A549 (cell line): ENCODE measurements at regions of chr2 and their contacts with region 1.

Region 1: DNA sequence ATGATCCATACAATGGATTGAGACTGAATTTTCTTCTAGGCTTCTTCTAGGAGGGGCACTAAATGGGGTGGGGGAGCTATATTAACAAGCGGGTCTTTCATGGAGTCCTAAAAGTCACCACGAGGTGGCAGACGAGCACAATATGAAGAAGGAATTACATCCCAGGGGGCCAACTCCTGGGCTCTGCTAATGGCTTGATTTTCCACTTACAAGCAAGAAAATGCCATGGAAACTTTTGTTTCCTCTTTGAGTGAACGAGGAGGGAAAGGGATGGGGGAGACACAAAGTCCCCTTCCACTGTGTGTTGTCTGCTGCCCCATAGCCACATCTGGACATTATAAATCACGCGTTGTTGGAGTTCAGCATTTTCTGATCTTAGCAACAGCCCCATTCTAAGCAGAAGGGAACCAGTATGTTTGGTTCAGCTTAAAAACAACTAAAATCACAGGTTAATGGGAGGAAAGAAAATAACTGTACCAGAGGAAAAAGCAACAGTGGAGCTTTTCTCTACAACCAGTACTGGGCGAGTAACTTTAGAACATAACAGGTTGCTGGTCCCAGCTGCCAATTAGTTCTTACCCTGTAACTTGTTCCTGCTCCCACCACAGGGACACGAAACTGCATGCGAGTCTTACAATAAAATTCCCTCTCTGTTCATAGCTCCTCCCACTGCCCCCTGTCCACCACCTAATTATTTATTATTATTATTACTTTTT is 285.0 kb upstream of the PARD3B start:
- DNase-seq: peak; percentile 63 to 70
- ATAC-seq: peak; percentile 77 to 97; a peak in 4 of 6 replicates
- H3K4me3 ChIP-seq: no peak overlapping the region
- H3K27ac ChIP-seq: no peak overlapping the region
- H3K4me1 ChIP-seq: no peaks in the 10 kb centered on the region
- CTCF ChIP-seq: peak; percentile 89
- EP300 ChIP-seq: no peak
- POLR2A ChIP-seq: no peak
- RAD21 ChIP-seq: peak; percentile 79 to 84

Region 2: GRCh38 chr2:204272089-204272488 is 11.8 kb after region 1 on chr2:
- CTCF ChIA-PET with region 1: interaction called, 13 read pairs
- POLR2A ChIA-PET with region 1: no interaction called
- DNase-seq: no peak
- ATAC-seq: no peak
- H3K4me3 ChIP-seq: no peak overlapping the region
- H3K27ac ChIP-seq: no peak overlapping the region
- H3K4me1 ChIP-seq: no peaks in the 10 kb centered on the region
- CTCF ChIP-seq: no peak
- EP300 ChIP-seq: no peak
- POLR2A ChIP-seq: no peak
- RAD21 ChIP-seq: no peak

Region 3: DNA sequence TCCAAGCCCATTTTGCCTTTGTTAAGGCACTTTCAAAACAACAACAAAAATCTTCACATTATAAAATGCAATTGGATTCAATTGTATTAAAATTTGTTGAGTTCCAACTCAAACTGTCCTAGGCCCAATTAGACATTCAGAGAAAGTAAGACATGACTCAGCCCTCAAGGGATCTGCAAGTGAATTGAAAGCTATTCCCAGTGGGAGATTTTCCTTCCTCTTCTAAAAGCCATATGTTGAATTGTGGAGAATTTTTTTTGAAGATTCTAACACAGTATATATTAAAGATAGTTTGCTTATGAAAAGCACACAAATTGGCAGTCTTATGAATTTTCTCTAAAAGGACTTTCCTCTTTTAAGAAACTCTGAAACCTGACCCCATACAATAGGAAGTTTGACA is 16.9 kb after region 1 on chr2:
- CTCF ChIA-PET with region 1: interaction called, 13 read pairs
- POLR2A ChIA-PET with region 1: no interaction called
- DNase-seq: no peak
- ATAC-seq: no peak
- H3K4me3 ChIP-seq: no peak overlapping the region
- H3K27ac ChIP-seq: no peak overlapping the region
- H3K4me1 ChIP-seq: no peaks in the 10 kb centered on the region
- CTCF ChIP-seq: no peak
- EP300 ChIP-seq: no peak
- POLR2A ChIP-seq: no peak
- RAD21 ChIP-seq: no peak

Region 4: GRCh38 chr2:204578938-204579598 is 318.7 kb after region 1 on chr2:
- CTCF ChIA-PET with region 1: no interaction called
- POLR2A ChIA-PET with region 1: interaction called, 10 read pairs
- DNase-seq: no peak
- ATAC-seq: no peak
- H3K4me3 ChIP-seq: no peak overlapping the region
- H3K27ac ChIP-seq: no peak overlapping the region
- H3K4me1 ChIP-seq: no peaks in the 10 kb centered on the region
- CTCF ChIP-seq: no peak
- EP300 ChIP-seq: no peak
- POLR2A ChIP-seq: no peak
- RAD21 ChIP-seq: no peak